ENCODE measurements at regions of chr10 and their contacts with region 1.

Region 1: GRCh38 chr10:76347832-76348231 is 916.4 kb downstream of the LRMDA start:
- DNase-seq: no peak
- ATAC-seq: no peak
- H3K4me3 ChIP-seq: no peak overlapping the region
- H3K4me3 Mint-ChIP-seq: no peak overlapping the region
- H3K27ac ChIP-seq: no peak overlapping the region
- H3K27ac Mint-ChIP-seq: no peak overlapping the region
- H3K4me1 ChIP-seq: no peaks in the 10 kb centered on the region
- H3K4me1 Mint-ChIP-seq: no peaks in the 10 kb centered on the region
- H3K27me3 ChIP-seq: no peaks in the 10 kb centered on the region
- H3K27me3 Mint-ChIP-seq: no peaks in the 10 kb centered on the region
- CTCF ChIP-seq: no peak

Region 2: DNA sequence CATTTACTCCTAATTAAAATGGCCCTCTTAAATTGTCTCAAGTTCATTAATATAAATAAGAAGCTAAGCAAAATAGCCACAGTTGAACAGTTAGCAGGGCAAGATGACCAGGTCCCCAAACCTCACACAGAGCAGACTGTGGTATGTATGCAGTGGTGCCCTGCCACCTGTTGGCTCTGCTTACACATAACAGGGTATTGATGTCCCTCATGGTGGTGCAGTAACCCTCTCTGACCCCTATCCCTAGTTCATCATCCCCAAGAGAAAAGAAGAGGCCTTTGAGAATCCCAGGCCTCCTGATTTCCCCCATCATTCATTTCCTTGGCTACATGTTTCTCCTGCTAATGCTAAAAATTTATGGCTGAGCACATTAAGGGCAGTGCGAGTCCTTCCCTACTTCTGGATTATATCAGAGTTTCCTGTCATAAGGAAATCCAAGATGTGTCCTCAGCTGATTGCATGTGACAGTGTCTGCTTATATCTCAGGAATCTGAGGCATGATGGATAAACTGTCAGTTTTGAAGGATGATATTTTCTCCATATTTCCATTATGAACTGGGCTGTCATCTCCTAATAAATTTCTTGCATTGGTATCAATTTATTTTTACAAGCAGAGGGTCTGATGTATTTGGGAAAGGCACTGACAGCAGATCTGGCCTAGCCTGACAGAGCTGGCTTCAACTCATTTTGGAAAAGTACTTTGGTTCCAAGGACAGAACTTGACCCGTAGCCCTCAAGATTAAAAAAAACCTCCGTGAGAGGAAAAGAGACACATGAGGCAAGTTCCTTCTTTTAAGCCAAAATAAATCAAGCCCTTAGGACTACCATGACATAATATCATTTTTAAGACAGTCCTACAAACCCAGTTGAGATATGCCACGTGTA is 35.8 kb before region 1 on chr10:
- CTCF ChIA-PET with region 1: no interaction called
- POLR2A ChIA-PET with region 1: no interaction called
- intact Hi-C with region 1: no loop called
- DNase-seq: peak in 1 of 9 experiments; percentile 3
- ATAC-seq: no peak
- H3K4me3 ChIP-seq: no peak overlapping the region
- H3K4me3 Mint-ChIP-seq: no peak overlapping the region
- H3K27ac ChIP-seq: no peak overlapping the region
- H3K27ac Mint-ChIP-seq: no peak overlapping the region
- H3K4me1 ChIP-seq: no peaks in the 10 kb centered on the region
- H3K4me1 Mint-ChIP-seq: no peaks in the 10 kb centered on the region
- H3K27me3 ChIP-seq: no peaks in the 10 kb centered on the region
- H3K27me3 Mint-ChIP-seq: peaks cover 2% of the 10 kb centered on the region
- CTCF ChIP-seq: no peak

Region 3: DNA sequence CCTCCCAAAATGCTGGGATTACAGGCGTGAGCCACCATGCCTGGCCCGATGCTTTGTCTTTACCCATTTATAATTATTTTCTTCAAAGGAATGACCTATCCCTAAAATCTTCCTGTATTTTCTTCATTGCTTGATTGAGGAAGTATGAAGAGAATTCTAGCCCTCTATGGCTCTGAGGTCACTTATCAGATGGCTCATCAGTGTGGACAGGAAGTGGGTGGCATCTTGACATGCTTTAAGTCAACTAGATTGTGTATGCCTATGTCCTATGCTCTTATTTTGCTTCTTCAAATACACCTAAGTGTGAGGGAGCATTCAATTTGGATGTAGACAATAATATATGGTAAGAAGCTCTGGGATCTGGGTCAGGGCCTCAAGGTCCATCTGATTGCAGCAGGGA is 104.1 kb after region 1 on chr10:
- CTCF ChIA-PET with region 1: no interaction called
- POLR2A ChIA-PET with region 1: no interaction called
- intact Hi-C with region 1: loop called in 1 of 2 experiments (anchors 2 kb)
- DNase-seq: no peak
- ATAC-seq: no peak
- H3K4me3 ChIP-seq: no peak overlapping the region
- H3K4me3 Mint-ChIP-seq: no peak overlapping the region
- H3K27ac ChIP-seq: no peak overlapping the region
- H3K27ac Mint-ChIP-seq: no peak overlapping the region
- H3K4me1 ChIP-seq: no peaks in the 10 kb centered on the region
- H3K4me1 Mint-ChIP-seq: no peaks in the 10 kb centered on the region
- H3K27me3 ChIP-seq: no peaks in the 10 kb centered on the region
- H3K27me3 Mint-ChIP-seq: no peaks in the 10 kb centered on the region
- CTCF ChIP-seq: no peak

Region 4: GRCh38 chr10:78255796-78256638 is 1908.2 kb after region 1 on chr10:
- CTCF ChIA-PET with region 1: no interaction called
- POLR2A ChIA-PET with region 1: no interaction called
- intact Hi-C with region 1: no loop called
- DNase-seq: peak in 1 of 9 experiments; percentile 24
- ATAC-seq: no peak
- H3K4me3 ChIP-seq: no peak overlapping the region
- H3K4me3 Mint-ChIP-seq: no peak overlapping the region
- H3K27ac ChIP-seq: no peak overlapping the region
- H3K27ac Mint-ChIP-seq: no peak overlapping the region
- H3K4me1 ChIP-seq: no peaks in the 10 kb centered on the region
- H3K4me1 Mint-ChIP-seq: no peaks in the 10 kb centered on the region
- H3K27me3 ChIP-seq: no peaks in the 10 kb centered on the region
- H3K27me3 Mint-ChIP-seq: no peaks in the 10 kb centered on the region
- CTCF ChIP-seq: no peak

Measured in CD8-positive, alpha-beta T cell (primary cell).